Naive thymus-derived CD4-positive, alpha-beta T cell (primary cell): ENCODE measurements at regions of chr14 and their contacts with region 1.

Region 1: GRCh38 chr14:39368261-39368959 is 63.8 kb downstream of the FBXO33 start:
- DNase-seq: peak in 2 of 9 donors; percentile 4 to 15
- ATAC-seq: no peak
- H3K4me3 ChIP-seq: no peak overlapping the region
- H3K4me3 Mint-ChIP-seq: no peak overlapping the region
- H3K27ac ChIP-seq: no peak overlapping the region
- H3K27ac Mint-ChIP-seq: peak overlapping the region in 3 of 9 donors; percentile 3 to 43 (median 13)
- H3K4me1 ChIP-seq: no peaks in the 10 kb centered on the region
- H3K4me1 Mint-ChIP-seq: peaks cover 0 to 15% (median 4%) of the 10 kb centered on the region in 7 donors
- H3K27me3 ChIP-seq: no peaks in the 10 kb centered on the region
- H3K27me3 Mint-ChIP-seq: no peaks in the 10 kb centered on the region

Region 2: GRCh38 chr14:38721822-38722431 is 646.5 kb before region 1 on chr14:
- CTCF ChIA-PET with region 1: no interaction called
- POLR2A ChIA-PET with region 1: no interaction called
- intact Hi-C with region 1: loop called in 1 of 2 experiments (anchors 10 kb)
- DNase-seq: peak in 1 of 9 donors; percentile 2
- ATAC-seq: peak; percentile 70
- H3K4me3 ChIP-seq: no peak overlapping the region
- H3K4me3 Mint-ChIP-seq: no peak overlapping the region
- H3K27ac ChIP-seq: no peak overlapping the region
- H3K27ac Mint-ChIP-seq: no peak overlapping the region
- H3K4me1 ChIP-seq: no peaks in the 10 kb centered on the region
- H3K4me1 Mint-ChIP-seq: no peaks in the 10 kb centered on the region
- H3K27me3 ChIP-seq: no peaks in the 10 kb centered on the region
- H3K27me3 Mint-ChIP-seq: no peaks in the 10 kb centered on the region

Region 3: DNA sequence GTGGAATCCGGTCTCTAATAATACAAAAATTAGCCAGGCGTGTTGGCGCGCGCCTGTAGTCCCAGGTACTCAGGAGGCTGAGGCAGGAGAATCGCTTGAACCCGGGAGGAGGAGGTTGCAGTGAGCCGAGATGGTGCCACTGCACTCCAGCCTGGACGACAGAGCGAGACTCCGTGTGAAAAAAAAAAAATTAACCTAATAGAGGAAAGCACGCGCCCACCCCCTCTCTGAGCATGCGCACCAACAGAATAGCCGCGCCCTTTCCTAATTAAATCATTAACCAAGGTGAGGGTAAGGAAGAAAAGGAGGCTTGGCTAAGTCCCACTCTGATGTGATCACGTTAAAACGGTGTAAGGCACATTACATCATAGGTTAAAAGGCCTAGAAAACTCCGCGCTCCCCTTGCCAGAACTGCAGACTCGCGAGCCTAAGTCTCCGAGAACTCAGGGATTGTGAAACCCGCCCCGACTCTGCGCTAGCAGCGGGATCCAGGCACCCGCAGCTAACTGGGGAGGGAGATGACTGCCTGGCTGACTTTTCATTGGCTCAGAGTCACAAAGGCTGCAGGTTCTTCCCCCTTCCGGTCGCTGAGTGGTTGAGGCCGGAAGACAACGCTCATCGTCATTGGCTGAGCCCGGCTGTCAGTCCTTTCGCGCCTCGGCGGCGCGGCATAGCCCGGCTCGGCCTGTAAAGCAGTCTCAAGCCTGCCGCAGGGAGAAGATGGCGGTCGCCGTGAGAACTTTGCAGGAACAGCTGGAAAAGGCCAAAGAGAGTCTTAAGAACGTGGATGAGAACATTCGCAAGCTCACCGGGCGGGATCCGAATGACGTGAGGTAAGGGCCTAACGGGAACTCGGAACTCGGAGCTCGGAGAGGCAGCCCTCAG is 193.6 kb before region 1 on chr14 and contains the start of gene PNN:
- CTCF ChIA-PET with region 1: no interaction called
- POLR2A ChIA-PET with region 1: interaction called, 8 read pairs
- intact Hi-C with region 1: loop called in 1 of 2 experiments (anchors 5 kb)
- DNase-seq: peak; percentile 83 to 99 (median 98)
- ATAC-seq: peak; percentile 94
- H3K4me3 ChIP-seq: peak within 1 kb of the TSS; percentile 80
- H3K4me3 Mint-ChIP-seq: peak within 1 kb of the TSS; percentile 95 to 100 (median 99)
- H3K27ac ChIP-seq: peak within 1 kb of the TSS; percentile 90
- H3K27ac Mint-ChIP-seq: peak within 1 kb of the TSS; percentile 96 to 100 (median 99)
- H3K4me1 ChIP-seq: peaks cover 16 to 28% of the 10 kb centered on the region in 2 donors
- H3K4me1 Mint-ChIP-seq: peaks cover 27 to 74% (median 50%) of the 10 kb centered on the region in 7 donors
- H3K27me3 ChIP-seq: no peaks in the 10 kb centered on the region
- H3K27me3 Mint-ChIP-seq: no peaks in the 10 kb centered on the region
- total RNA-seq, gene PNN: 80.1 to 120 (median 102) TPM

Region 4: DNA sequence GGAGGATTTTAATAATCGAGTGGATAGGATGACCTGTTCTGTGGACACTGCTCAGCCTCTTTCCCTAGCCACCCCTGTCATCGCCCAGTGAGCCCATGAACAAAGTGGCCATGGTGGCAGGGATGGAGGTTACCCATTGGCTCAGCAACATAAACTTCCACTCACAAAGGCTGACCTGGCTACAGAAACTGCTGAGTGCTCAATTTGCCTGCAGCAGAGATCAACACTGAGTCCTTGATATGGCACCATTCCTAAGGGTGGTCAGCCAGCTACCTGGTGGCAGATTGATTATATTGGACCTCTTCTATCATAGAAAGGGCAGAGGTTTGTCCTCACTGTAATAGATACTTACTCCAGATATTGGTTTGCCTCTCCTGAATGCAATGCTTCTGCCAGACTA is 529.2 kb after region 1 on chr14:
- CTCF ChIA-PET with region 1: no interaction called
- POLR2A ChIA-PET with region 1: no interaction called
- intact Hi-C with region 1: no loop called
- DNase-seq: no peak
- ATAC-seq: no peak
- H3K4me3 ChIP-seq: no peak overlapping the region
- H3K4me3 Mint-ChIP-seq: no peak overlapping the region
- H3K27ac ChIP-seq: no peak overlapping the region
- H3K27ac Mint-ChIP-seq: no peak overlapping the region
- H3K4me1 ChIP-seq: no peaks in the 10 kb centered on the region
- H3K4me1 Mint-ChIP-seq: no peaks in the 10 kb centered on the region
- H3K27me3 ChIP-seq: no peaks in the 10 kb centered on the region
- H3K27me3 Mint-ChIP-seq: no peaks in the 10 kb centered on the region